Activated naive CD4-positive, alpha-beta T cell treated with anti-CD3 and anti-CD28 coated beads, Interleukin-2, amount 10 ng/mL, durations not matched to agents 7 days and 5 days (primary cell): ENCODE measurements at regions of chr1 and their contacts with region 1.

Region 1: GRCh38 chr1:54810100-54810942 is 9.2 kb upstream of the TTC22 start:
- DNase-seq: peak; percentile 80
- H3K4me3 Mint-ChIP-seq: no peak overlapping the region
- H3K27ac Mint-ChIP-seq: no peak overlapping the region
- H3K4me1 Mint-ChIP-seq: peaks cover 29% of the 10 kb centered on the region
- H3K27me3 Mint-ChIP-seq: no peaks in the 10 kb centered on the region

Region 2: DNA sequence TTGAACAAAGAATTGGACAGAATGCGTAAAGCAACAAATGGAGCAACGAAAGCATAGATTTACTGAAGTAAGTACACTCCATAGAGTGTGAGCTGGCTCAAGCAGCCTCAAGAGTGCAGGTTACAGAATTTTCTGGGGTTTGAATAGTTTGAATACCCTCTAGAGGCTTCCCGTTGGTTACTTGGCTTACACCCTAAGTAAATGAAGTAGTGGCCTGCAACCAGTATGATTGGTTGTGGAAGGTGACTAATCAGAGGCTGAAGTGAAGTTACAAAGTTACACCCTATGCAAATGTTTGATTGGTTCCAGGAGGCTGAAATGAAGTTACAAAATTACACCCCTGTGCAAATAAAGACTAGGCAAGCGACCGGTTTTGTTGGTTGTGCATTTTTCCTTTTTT is 746.0 kb before region 1 on chr1:
- CTCF ChIA-PET with region 1: no interaction called
- DNase-seq: no peak
- H3K4me3 Mint-ChIP-seq: no peak overlapping the region
- H3K27ac Mint-ChIP-seq: no peak overlapping the region
- H3K4me1 Mint-ChIP-seq: no peaks in the 10 kb centered on the region
- H3K27me3 Mint-ChIP-seq: no peaks in the 10 kb centered on the region

Region 3: GRCh38 chr1:54499360-54500106 is 310.8 kb before region 1 on chr1:
- CTCF ChIA-PET with region 1: interaction called, 14 read pairs
- DNase-seq: peak; percentile 70
- H3K4me3 Mint-ChIP-seq: peak overlapping the region; percentile 64
- H3K27ac Mint-ChIP-seq: no peak overlapping the region
- H3K4me1 Mint-ChIP-seq: peaks cover 11% of the 10 kb centered on the region
- H3K27me3 Mint-ChIP-seq: peaks cover 77% of the 10 kb centered on the region

Region 4: GRCh38 chr1:54671985-54672608 is 138.2 kb before region 1 on chr1:
- CTCF ChIA-PET with region 1: interaction called, 27 read pairs
- DNase-seq: peak; percentile 82
- H3K4me3 Mint-ChIP-seq: no peak overlapping the region
- H3K27ac Mint-ChIP-seq: no peak overlapping the region
- H3K4me1 Mint-ChIP-seq: peaks cover 6% of the 10 kb centered on the region
- H3K27me3 Mint-ChIP-seq: peaks cover 11% of the 10 kb centered on the region

Region 5: GRCh38 chr1:54791880-54792522 is 18.3 kb before region 1 on chr1:
- CTCF ChIA-PET with region 1: no interaction called
- DNase-seq: peak; percentile 71
- H3K4me3 Mint-ChIP-seq: no peak overlapping the region
- H3K27ac Mint-ChIP-seq: no peak overlapping the region
- H3K4me1 Mint-ChIP-seq: peaks cover 10% of the 10 kb centered on the region
- H3K27me3 Mint-ChIP-seq: no peaks in the 10 kb centered on the region